ENCODE measurements at regions of chr3 and their contacts with region 1.

Region 1: GRCh38 chr3:155079746-155080487 is at the start of gene MME:
- DNase-seq: peak; percentile 86
- H3K4me3 ChIP-seq: peak within 1 kb of the TSS; percentile 95
- H3K27ac ChIP-seq: peak within 1 kb of the TSS; percentile 41
- H3K4me1 ChIP-seq: peaks cover 14% of the 10 kb centered on the region; the same call in 1 of the 2 replicates
- H3K27me3 ChIP-seq: no peaks in the 10 kb centered on the region
- total RNA-seq, gene MME: 204 and 302 TPM in 2 replicates

Region 2: DNA sequence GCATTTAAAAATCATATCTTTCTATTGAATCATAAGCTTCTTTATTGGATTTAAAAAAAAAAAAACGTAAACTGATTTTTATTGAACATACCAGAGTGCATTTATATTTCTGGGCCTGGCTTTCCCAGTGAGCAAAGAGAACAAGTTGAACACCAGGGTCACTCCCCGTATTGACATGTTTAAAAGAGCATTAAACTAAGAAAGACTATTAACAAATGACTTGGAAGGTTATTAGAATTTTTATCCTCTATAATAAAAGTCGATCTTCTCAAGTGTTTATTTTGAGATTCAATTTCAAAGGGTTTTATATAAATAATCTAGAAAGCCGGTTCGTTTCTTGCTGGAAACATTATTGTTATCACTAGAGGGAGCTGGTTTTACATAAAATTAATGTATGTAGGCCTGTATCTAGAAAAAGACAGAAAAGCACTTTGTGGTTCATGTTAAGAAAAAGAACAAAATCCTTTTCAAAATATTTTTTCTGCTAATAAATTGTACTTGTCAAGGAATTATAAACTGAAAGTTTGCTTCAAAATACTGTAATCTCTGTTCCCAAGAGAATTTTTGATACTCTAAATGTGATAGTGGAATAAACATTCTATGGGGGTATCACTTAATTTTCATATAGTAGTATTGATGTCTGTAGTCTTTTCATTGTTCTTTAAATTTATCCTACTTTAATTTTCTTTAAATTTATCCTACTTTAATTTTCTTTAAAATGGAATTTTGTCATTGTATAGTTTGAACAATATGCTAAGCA is 321.6 kb before region 1 on chr3:
- in situ Hi-C with region 1: loop called (anchors 25 kb)
- DNase-seq: peak; percentile 69
- H3K4me3 ChIP-seq: no peak overlapping the region
- H3K27ac ChIP-seq: 0 out of 2 replicates have a peak overlapping the region, but pooled peaks have one; percentile 6
- H3K4me1 ChIP-seq: no peaks in the 10 kb centered on the region
- H3K27me3 ChIP-seq: no peaks in the 10 kb centered on the region